Testis (tissue), 5 donors: ENCODE measurements at regions of chr18 and their contacts with region 1.

Region 1: GRCh38 chr18:55589625-55590291 is 1.8 kb upstream of the TCF4 start:
- DNase-seq: peak; percentile 99
- H3K4me3 ChIP-seq: peak overlapping the region; percentile 78 to 83
- H3K27ac ChIP-seq: peak overlapping the region; percentile 93 to 95
- H3K4me1 ChIP-seq: peaks cover 12% of the 10 kb centered on the region
- H3K27me3 ChIP-seq: no peaks in the 10 kb centered on the region
- CTCF ChIP-seq: peak in 1 of 3 experiments; percentile 23
- POLR2A ChIP-seq: no peak

Region 2: DNA sequence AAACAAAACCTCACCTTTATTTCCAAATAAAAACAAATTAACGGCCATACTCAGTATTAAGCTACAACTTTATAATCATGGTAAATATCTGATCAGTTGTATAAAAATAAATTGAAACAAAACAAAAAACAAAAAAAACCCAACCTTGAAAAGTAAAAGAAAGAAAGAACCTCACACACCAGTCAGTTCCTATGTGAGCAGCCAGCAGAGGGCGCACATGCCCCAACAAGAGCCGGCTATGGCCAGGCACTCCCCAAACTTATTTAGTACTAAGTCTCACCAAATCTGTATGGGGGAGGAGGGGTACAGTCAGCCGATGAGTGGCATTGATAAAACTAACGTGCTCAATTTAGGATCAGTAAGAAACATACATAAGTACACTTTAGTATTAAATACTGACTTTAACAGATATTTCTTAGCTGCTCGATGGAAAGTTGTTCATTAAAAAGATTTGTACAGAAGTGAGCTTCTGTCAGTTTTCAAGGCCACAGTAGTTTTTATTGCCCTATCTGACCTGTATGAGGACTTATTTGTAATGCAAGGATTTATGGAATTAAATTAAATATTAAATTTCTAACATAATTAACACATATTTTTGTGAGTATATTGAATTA is 174.4 kb before region 1 on chr18:
- intact Hi-C with region 1: loop called (anchors 5 kb)
- DNase-seq: peak; percentile 96
- H3K4me3 ChIP-seq: no peak overlapping the region
- H3K27ac ChIP-seq: no peak overlapping the region
- H3K4me1 ChIP-seq: peaks cover 4% of the 10 kb centered on the region
- H3K27me3 ChIP-seq: no peaks in the 10 kb centered on the region
- CTCF ChIP-seq: peak; percentile 81 to 88 (median 83)
- POLR2A ChIP-seq: no peak